ENCODE measurements at regions of chr16 and their contacts with region 1.

Region 1: DNA sequence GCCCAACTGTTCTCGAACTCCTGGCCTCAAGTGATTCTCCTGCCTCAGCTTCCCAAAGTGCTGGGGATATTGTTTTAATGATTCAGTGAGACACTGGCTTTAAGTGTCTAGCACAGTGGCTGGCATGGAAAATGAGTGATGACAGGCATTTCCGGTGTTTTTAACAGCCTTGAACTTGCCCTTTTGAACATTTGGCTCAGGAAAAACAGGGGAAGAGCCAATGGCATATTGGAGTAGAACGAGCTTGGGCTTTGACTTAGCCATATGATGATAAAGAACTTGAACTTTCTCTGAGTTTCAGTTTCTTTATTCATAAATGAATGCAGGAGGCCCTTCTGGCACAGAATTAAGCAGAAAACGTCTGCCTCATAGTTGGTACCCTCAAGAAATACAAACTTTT is 145.0 kb upstream of the HS3ST4 start:
- DNase-seq: no peak
- ATAC-seq: no peak
- H3K4me3 ChIP-seq: no peak overlapping the region
- H3K27ac ChIP-seq: no peak overlapping the region
- H3K4me1 ChIP-seq: no peaks in the 10 kb centered on the region
- H3K27me3 ChIP-seq: no peaks in the 10 kb centered on the region

Region 2: DNA sequence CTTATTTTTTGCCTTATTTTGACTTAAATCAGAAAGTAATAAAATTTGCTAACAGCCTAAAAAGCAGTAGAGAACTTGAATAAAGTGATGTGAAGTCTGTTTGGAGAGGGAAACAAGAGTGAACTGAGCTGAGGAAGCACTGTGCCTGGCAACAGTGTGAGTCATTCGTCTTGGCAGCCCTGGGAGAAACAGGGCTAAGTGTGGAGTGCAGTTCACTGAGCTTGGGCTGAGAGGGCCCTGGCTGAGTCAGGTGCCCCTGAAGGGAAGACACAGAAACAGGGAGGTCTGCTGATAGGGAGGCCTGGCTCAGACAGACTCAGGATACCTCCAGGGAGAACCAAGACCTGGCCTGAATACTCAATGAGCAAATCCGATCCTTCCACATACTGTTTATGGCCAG is 277.1 kb after region 1 on chr16:
- intact Hi-C with region 1: no loop called
- DNase-seq: no peak
- ATAC-seq: no peak
- H3K4me3 ChIP-seq: no peak overlapping the region
- H3K27ac ChIP-seq: no peak overlapping the region
- H3K4me1 ChIP-seq: no peaks in the 10 kb centered on the region
- H3K27me3 ChIP-seq: no peaks in the 10 kb centered on the region

Region 3: GRCh38 chr16:26826500-26826899 is 1279.7 kb after region 1 on chr16:
- intact Hi-C with region 1: loop called in 1 of 4 experiments (anchors 5 kb)
- DNase-seq: no peak
- ATAC-seq: no peak
- H3K4me3 ChIP-seq: no peak overlapping the region
- H3K27ac ChIP-seq: no peak overlapping the region
- H3K4me1 ChIP-seq: no peaks in the 10 kb centered on the region
- H3K27me3 ChIP-seq: no peaks in the 10 kb centered on the region

Measured in right cardiac atrium (tissue), 5 donors.